Panc1 (cell line): ENCODE measurements at regions of chr11 and their contacts with region 1.

Region 1: GRCh38 chr11:75454987-75455386 is 22.0 kb upstream of the KLHL35 start:
- DNase-seq: no peak
- ATAC-seq: no peak
- H3K4me3 ChIP-seq: no peak overlapping the region
- H3K27ac ChIP-seq: no peak overlapping the region
- H3K4me1 ChIP-seq: no peaks in the 10 kb centered on the region
- H3K27me3 ChIP-seq: 0 out of 2 replicates have a peak, but pooled peaks cover 3% of the 10 kb centered on the region
- CTCF ChIP-seq: no peak

Region 2: DNA sequence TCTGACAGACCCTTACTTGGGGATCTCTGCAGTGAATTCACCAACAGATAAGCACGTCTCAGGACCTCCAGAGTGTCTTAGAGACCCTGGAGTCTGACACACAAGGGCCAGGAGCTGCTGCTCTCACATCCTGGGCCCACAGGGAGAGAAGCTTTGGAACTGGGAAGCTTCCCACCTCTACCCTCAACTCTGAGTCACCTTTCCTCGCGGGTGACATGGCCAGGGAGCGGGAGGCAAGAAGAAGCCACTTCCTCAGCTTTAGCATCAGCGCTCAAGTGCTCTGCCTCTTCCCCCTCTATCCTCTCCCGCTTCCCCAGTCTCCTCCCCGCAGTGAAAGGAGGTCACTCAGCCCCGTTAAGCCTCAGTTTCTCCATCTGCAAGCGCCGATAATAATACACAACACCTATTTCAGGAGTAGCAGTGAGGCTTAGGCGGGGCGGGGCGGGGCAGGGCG is 69.6 kb after region 1 on chr11:
- CTCF ChIA-PET with region 1: no interaction called
- POLR2A ChIA-PET with region 1: no interaction called
- in situ Hi-C with region 1: loop called (anchors 5 kb)
- intact Hi-C with region 1: no loop called
- DNase-seq: no peak
- ATAC-seq: no peak
- H3K4me3 ChIP-seq: peak overlapping the region; percentile 61 to 68
- H3K27ac ChIP-seq: no peak overlapping the region
- H3K4me1 ChIP-seq: peaks cover 3% of the 10 kb centered on the region; the same call in 1 of the 2 replicates
- H3K27me3 ChIP-seq: peaks cover 4% of the 10 kb centered on the region; the same call in 1 of the 2 replicates
- CTCF ChIP-seq: no peak